Activated B cell treated with CpG ODN at 0.5 μM for 24 hours (primary cell): ENCODE measurements at regions of chr11 and their contacts with region 1.

Region 1: GRCh38 chr11:10838083-10838482 is 19.8 kb downstream of the ZBED5 start:
- DNase-seq: no peak
- ATAC-seq: no peak
- H3K4me3 Mint-ChIP-seq: no peak overlapping the region
- H3K27ac Mint-ChIP-seq: no peak overlapping the region
- H3K4me1 Mint-ChIP-seq: peaks cover 16% of the 10 kb centered on the region
- H3K27me3 Mint-ChIP-seq: no peaks in the 10 kb centered on the region
- CTCF ChIP-seq: no peak

Region 2: DNA sequence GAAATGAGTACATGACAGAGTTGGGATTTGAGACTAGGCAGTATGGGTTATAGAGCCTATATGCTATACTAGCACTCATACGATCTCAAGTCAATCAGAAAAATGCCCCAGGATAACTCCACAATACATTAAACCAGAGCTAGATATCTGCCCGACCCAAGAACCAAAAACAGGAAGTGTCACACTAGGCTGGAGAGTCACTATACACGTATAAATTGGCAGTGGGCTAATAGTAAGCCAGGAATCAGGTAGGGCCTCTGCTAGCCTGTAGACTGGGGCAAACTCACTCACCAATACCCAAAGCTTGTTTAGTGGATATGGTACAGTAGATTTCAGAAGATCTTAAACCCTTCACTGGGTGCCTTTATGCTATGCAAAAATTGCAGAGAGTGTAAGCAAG is 13.2 kb before region 1 on chr11:
- CTCF ChIA-PET with region 1: no interaction called
- POLR2A ChIA-PET with region 1: no interaction called
- intact Hi-C with region 1: loop called (anchors 2 kb)
- DNase-seq: no peak
- ATAC-seq: peak; percentile 99
- H3K4me3 Mint-ChIP-seq: peak overlapping the region; percentile 63
- H3K27ac Mint-ChIP-seq: peak overlapping the region; percentile 90
- H3K4me1 Mint-ChIP-seq: peaks cover 32% of the 10 kb centered on the region
- H3K27me3 Mint-ChIP-seq: no peaks in the 10 kb centered on the region
- CTCF ChIP-seq: no peak

Region 3: DNA sequence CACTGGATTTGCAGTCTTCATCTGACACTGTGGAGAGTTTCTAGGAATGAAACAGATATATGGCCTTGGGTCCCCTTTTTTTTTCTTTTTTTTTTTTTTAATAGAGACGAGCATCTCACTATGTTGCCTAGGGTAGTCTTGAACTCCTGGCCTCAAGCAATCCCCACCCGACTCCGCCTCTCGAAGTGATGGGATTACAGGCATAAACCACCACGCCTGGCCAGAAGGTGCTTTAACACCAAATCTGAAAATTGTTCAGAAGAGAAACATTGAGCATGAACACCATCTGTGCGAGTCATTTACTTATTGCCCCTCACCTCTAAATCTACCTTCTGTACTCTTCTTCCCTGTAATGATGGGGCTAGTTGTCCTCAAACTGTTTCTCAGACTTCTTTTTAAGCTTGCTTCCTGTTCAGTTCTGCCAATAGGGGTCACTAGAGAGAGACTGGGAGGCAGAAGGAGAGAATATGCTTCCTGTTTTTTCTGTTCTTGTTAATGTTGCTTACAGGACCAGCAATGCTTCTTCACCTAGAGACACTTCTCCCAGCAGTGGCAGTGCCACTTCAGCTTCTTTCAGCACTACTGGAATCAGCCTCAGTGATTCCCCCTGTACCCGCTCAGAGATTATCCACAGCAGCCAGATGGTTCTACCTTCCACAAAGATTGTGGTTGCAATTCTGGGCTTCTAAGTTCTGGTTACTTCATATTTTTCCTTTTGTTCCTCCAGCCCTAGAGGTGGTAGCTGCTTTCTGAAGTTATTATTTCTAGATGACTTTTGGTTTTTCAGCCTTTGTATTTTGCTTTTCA is 40.5 kb after region 1 on chr11:
- CTCF ChIA-PET with region 1: no interaction called
- POLR2A ChIA-PET with region 1: no interaction called
- intact Hi-C with region 1: no loop called
- DNase-seq: no peak
- ATAC-seq: peak; percentile 84
- H3K4me3 Mint-ChIP-seq: no peak overlapping the region
- H3K27ac Mint-ChIP-seq: no peak overlapping the region
- H3K4me1 Mint-ChIP-seq: peaks cover 13% of the 10 kb centered on the region
- H3K27me3 Mint-ChIP-seq: no peaks in the 10 kb centered on the region
- CTCF ChIP-seq: no peak